ENCODE measurements at regions of chr2 and their contacts with region 1.

Region 1: DNA sequence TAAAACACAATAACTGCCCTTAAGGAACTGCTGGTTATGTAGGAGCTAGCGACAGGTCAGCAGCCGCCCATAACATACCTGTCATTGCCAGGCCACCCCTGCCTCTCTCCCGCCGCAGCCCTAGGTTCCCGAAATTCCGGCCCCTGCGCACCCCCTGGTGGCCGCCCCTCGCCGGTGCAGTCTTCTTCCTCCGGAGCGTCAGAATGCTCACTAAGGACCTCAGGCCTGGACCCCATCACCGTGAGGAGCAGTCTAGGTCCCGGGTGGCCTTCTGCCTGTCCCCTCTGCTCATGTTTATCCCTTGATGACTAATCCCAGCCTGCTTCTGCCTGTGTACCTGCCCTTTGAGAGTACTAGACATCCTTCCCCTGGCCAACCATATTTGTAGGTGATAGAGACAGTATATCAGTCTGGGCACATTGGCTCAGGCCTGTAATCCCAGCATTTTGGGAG is 115.7 kb upstream of the SLC1A4 start:
- DNase-seq: peak; percentile 22
- ATAC-seq: peak; percentile 98
- H3K4me3 ChIP-seq: no peak overlapping the region
- H3K27ac ChIP-seq: no peak overlapping the region
- H3K4me1 ChIP-seq: peaks cover 5% of the 10 kb centered on the region
- H3K27me3 ChIP-seq: peaks cover 34% of the 10 kb centered on the region
- CTCF ChIP-seq: peak; percentile 93
- POLR2A ChIP-seq: 0 out of 2 replicates have a peak, but pooled peaks have one; percentile 33
- RAD21 ChIP-seq: peak; percentile 89

Region 2: DNA sequence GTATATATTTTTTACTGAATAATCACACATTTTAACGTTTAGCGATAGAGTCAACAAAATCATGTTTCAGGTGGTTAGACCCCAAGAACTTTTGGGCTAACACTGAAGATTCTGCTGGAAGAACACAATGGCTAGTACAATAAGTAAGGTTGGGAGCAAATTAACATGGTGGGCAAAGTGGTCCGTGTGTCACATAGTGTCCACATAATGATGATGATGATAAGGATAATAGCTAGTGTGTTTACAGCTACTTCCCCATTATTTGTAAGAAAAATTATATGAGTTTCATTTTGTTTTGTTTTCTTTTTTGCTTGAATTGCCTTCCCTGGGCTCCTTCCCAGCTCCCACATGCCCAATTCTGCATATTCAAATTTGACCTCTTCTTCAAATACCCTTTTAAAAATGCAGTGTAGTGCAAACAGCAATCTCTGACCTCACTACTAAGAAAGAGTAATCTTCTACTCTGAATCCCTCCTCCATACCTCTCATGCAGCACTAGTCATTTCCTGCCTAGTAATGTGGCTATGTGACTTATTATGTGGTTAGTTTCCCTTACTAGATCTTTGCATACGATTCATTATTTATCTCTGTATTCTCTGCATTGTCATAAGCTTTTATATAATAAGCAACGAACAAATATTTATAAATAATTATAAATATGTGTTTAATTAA is 837.3 kb before region 1 on chr2:
- CTCF ChIA-PET with region 1: no interaction called
- POLR2A ChIA-PET with region 1: no interaction called
- dilution Hi-C with region 1: no loop called
- in situ Hi-C with region 1: loop called (anchors 25 kb)
- intact Hi-C with region 1: no loop called
- DNase-seq: peak; percentile 89
- ATAC-seq: peak; percentile 92
- H3K4me3 ChIP-seq: no peak overlapping the region
- H3K27ac ChIP-seq: no peak overlapping the region
- H3K4me1 ChIP-seq: no peaks in the 10 kb centered on the region; the same call in 1 of the 2 replicates
- H3K27me3 ChIP-seq: no peaks in the 10 kb centered on the region
- CTCF ChIP-seq: no peak
- POLR2A ChIP-seq: no peak
- RAD21 ChIP-seq: no peak

Region 3: DNA sequence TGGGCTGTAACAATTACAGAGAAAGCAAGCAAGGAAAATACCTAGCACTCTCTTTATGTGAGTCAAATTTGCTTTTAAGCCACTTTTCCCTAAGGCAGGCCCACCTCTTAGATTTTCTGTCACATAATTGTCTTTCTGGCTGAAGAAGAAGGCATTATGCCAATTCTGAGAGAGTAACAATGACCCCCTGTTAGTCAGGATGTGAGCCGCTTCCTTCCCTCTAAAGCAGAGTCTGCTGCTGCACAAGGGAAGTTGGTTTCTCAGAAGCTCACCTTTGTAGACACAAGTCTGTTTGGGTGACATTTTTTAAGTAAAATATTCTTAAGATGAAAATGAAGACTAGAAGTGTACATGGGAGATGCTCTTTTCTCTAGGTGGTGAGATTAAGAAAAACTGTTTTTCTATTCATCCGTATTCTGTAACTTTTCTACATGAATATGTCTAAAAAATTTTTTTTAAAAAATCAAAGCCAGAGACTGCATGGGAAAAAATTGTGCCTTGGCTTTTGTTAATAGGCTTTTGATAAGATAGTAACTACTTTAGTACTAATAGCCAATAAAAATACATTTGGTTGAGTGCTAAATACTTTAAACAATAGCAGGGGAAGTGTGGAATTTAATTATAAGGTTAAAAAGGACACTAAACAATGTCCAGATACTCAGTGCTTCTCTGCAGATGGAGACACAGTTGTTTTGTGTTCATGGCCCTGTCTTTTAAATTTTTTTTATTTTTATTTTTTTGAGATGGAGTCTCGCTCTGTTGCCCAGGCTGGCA is 820.8 kb before region 1 on chr2:
- CTCF ChIA-PET with region 1: no interaction called
- POLR2A ChIA-PET with region 1: no interaction called
- dilution Hi-C with region 1: no loop called
- in situ Hi-C with region 1: loop called (anchors 25 kb)
- intact Hi-C with region 1: loop called (anchors 10 kb)
- DNase-seq: peak; percentile 5
- ATAC-seq: no peak
- H3K4me3 ChIP-seq: no peak overlapping the region
- H3K27ac ChIP-seq: no peak overlapping the region
- H3K4me1 ChIP-seq: no peaks in the 10 kb centered on the region
- H3K27me3 ChIP-seq: peaks cover 4% of the 10 kb centered on the region
- CTCF ChIP-seq: no peak
- POLR2A ChIP-seq: no peak
- RAD21 ChIP-seq: no peak

Region 4: GRCh38 chr2:64523666-64524603 is 349.6 kb before region 1 on chr2 and contains the start of gene AFTPH:
- CTCF ChIA-PET with region 1: no interaction called
- POLR2A ChIA-PET with region 1: no interaction called
- dilution Hi-C with region 1: no loop called
- in situ Hi-C with region 1: loop called (anchors 10 kb)
- intact Hi-C with region 1: loop called (anchors 1 kb)
- DNase-seq: peak; percentile 98
- ATAC-seq: peak; percentile 98
- H3K4me3 ChIP-seq: peak within 1 kb of the TSS; percentile 87
- H3K27ac ChIP-seq: peak within 1 kb of the TSS; percentile 68
- H3K4me1 ChIP-seq: no peaks in the 10 kb centered on the region
- H3K27me3 ChIP-seq: peaks cover 5% of the 10 kb centered on the region
- CTCF ChIP-seq: no peak
- POLR2A ChIP-seq: peak; percentile 60
- RAD21 ChIP-seq: no peak
- total RNA-seq, gene AFTPH: 19.9 and 21.9 TPM in 2 replicates

Region 5: DNA sequence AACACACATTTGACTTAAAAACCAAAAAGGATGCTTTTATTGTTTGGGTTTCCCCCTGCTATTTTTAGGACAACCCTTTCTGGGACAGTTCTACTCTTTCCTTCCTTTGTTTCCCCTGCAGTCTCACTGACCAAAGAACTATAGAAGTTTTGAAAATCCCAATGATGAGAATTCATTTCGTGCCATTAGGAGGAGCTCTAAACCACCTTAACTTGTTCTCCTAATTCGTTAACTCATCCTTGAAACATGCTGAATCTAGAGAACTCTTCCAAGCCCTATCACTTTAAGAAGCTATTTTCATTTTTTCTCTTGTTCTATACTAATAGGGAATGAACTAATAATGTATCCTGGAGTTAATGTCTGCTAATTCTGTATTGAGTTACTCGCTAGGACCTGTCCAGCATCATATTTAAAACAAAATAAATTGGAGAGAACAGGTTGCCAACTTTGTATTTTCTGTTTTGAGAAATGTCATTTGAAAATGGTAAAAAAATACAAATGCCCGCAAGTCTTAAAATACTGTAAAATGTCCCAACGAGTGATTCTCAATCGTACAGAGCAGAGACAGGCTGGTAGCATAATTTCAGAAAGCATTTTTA is 286.5 kb before region 1 on chr2:
- CTCF ChIA-PET with region 1: interaction called, 5 read pairs
- POLR2A ChIA-PET with region 1: no interaction called
- dilution Hi-C with region 1: no loop called
- in situ Hi-C with region 1: no loop called
- intact Hi-C with region 1: loop called (anchors 1 kb)
- DNase-seq: peak; percentile 72
- ATAC-seq: peak; percentile 80
- H3K4me3 ChIP-seq: no peak overlapping the region
- H3K27ac ChIP-seq: no peak overlapping the region
- H3K4me1 ChIP-seq: no peaks in the 10 kb centered on the region
- H3K27me3 ChIP-seq: no peaks in the 10 kb centered on the region
- CTCF ChIP-seq: peak; percentile 77
- POLR2A ChIP-seq: no peak
- RAD21 ChIP-seq: peak; percentile 87

Region 6: GRCh38 chr2:64595397-64596160 is 277.9 kb before region 1 on chr2:
- CTCF ChIA-PET with region 1: no interaction called
- POLR2A ChIA-PET with region 1: no interaction called
- dilution Hi-C with region 1: no loop called
- in situ Hi-C with region 1: loop called (anchors 5 kb)
- intact Hi-C with region 1: loop called (anchors 1 kb)
- DNase-seq: peak; percentile 17
- ATAC-seq: no peak; the same call in 1 of the 2 replicates
- H3K4me3 ChIP-seq: no peak overlapping the region
- H3K27ac ChIP-seq: no peak overlapping the region
- H3K4me1 ChIP-seq: peaks cover 6% of the 10 kb centered on the region
- H3K27me3 ChIP-seq: peaks cover 36% of the 10 kb centered on the region
- CTCF ChIP-seq: peak; percentile 49
- POLR2A ChIP-seq: no peak
- RAD21 ChIP-seq: peak; percentile 39